Activated CD4-positive, alpha-beta T cell treated with anti-CD3 and anti-CD28 coated beads for 36 hours (primary cell): ENCODE measurements at regions of chr12 and their contacts with region 1.

Region 1: DNA sequence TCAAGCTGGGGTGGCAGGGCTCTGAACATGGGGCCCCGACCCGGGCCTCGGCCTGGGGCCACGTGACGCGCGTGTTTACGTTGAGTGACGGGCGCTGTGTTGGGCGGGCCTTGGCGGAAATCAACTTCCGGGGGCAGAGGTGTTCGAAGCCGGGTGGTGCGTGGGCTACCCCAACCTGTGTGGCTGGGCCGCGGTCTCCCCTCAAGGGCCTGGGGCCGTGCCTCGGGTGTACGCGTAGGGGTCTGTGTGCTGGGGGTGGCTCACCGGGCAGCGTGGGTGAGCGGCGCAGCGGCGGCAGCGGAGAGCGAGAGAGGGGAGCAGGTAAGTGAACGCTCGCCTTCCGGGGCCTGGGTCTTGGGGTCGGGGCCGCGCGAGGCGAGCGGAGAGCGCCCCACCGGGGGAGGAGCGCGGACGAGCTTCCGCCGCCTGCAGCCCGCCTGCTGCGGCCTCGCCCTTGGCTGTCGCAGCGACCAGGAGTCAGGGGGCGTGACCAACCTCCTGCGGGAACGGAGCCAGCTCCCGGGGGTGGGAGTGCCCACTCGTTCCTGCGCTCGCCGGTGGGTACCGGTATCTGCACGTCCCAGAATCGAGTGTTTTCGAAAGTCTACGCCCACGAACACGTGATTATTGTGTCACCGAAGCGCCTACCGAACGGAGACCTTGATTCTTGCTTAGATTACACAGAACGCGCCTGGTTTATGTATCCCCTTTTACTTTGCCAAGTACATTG is at the start of gene CCDC91:
- DNase-seq: peak; percentile 93
- ATAC-seq: peak; percentile 83
- H3K4me3 Mint-ChIP-seq: peak within 1 kb of the TSS; percentile 89
- H3K27ac Mint-ChIP-seq: peak within 1 kb of the TSS; percentile 99
- H3K4me1 Mint-ChIP-seq: peaks cover 65% of the 10 kb centered on the region
- H3K27me3 Mint-ChIP-seq: no peaks in the 10 kb centered on the region
- total RNA-seq, gene CCDC91: 13.9 to 16.0 TPM

Region 2: GRCh38 chr12:27332407-27333301 is 857.8 kb before region 1 on chr12 and contains the start of gene BMAL2:
- CTCF ChIA-PET with region 1: no interaction called
- POLR2A ChIA-PET with region 1: no interaction called
- intact Hi-C with region 1: loop called in 1 of 2 experiments (anchors 1 kb)
- DNase-seq: peak; percentile 66
- ATAC-seq: peak; percentile 28
- H3K4me3 Mint-ChIP-seq: peak within 1 kb of the TSS; percentile 82
- H3K27ac Mint-ChIP-seq: peak within 1 kb of the TSS; percentile 90
- H3K4me1 Mint-ChIP-seq: peaks cover 42% of the 10 kb centered on the region
- H3K27me3 Mint-ChIP-seq: peaks cover 30% of the 10 kb centered on the region
- total RNA-seq, gene BMAL2: 10.9 to 13.2 TPM

Region 3: GRCh38 chr12:27779920-27780611 is 410.4 kb before region 1 on chr12 and contains the starts of genes KLHL42 and MANSC4:
- CTCF ChIA-PET with region 1: no interaction called
- POLR2A ChIA-PET with region 1: no interaction called
- intact Hi-C with region 1: loop called in 1 of 2 experiments (anchors 5 kb)
- DNase-seq: peak; percentile 80
- ATAC-seq: peak; percentile 86
- H3K4me3 Mint-ChIP-seq: peak within 1 kb of the TSS; percentile 80
- H3K27ac Mint-ChIP-seq: peak within 1 kb of the TSS; percentile 83
- H3K4me1 Mint-ChIP-seq: peaks cover 34% of the 10 kb centered on the region
- H3K27me3 Mint-ChIP-seq: no peaks in the 10 kb centered on the region
- total RNA-seq, gene KLHL42: 7.1 to 9.2 TPM
- total RNA-seq, gene MANSC4: not detected

Region 4: DNA sequence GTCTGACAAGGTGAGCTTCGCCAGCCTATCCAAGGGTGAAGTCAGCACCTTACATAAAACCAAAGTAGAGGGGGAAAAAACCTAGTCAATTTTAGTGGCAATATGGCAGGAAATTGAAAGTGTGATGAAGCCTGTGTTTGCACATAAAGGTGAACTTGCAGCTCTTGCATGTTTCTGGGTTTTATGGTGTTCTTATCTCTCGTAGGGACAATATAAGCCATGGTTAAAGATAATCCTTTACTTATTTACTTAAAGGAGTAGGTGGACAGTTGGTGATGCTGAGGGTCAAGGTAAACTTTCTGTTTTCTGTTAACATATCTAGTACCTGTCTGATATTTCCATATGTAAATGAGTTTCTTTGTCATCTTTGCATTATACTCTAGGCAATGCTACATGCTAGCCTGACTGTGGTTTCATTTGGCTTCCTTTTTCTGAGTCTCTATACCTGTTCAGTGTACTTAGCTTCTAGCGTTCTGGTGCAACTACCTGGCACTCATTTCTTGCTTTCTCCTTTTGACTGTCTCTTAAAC is 32.6 kb after region 1 on chr12:
- CTCF ChIA-PET with region 1: interaction called, 8 read pairs
- POLR2A ChIA-PET with region 1: no interaction called
- intact Hi-C with region 1: loop called (anchors 1 to 2 kb)
- DNase-seq: peak; percentile 25
- ATAC-seq: peak; percentile 94
- H3K4me3 Mint-ChIP-seq: peak overlapping the region; percentile 29
- H3K27ac Mint-ChIP-seq: peak overlapping the region; percentile 77
- H3K4me1 Mint-ChIP-seq: peaks cover 48% of the 10 kb centered on the region
- H3K27me3 Mint-ChIP-seq: no peaks in the 10 kb centered on the region

Region 5: GRCh38 chr12:28456934-28457710 is 266.6 kb after region 1 on chr12:
- CTCF ChIA-PET with region 1: no interaction called
- POLR2A ChIA-PET with region 1: no interaction called
- intact Hi-C with region 1: no loop called
- DNase-seq: no peak
- ATAC-seq: no peak
- H3K4me3 Mint-ChIP-seq: no peak overlapping the region
- H3K27ac Mint-ChIP-seq: no peak overlapping the region
- H3K4me1 Mint-ChIP-seq: no peaks in the 10 kb centered on the region
- H3K27me3 Mint-ChIP-seq: no peaks in the 10 kb centered on the region

Region 6: DNA sequence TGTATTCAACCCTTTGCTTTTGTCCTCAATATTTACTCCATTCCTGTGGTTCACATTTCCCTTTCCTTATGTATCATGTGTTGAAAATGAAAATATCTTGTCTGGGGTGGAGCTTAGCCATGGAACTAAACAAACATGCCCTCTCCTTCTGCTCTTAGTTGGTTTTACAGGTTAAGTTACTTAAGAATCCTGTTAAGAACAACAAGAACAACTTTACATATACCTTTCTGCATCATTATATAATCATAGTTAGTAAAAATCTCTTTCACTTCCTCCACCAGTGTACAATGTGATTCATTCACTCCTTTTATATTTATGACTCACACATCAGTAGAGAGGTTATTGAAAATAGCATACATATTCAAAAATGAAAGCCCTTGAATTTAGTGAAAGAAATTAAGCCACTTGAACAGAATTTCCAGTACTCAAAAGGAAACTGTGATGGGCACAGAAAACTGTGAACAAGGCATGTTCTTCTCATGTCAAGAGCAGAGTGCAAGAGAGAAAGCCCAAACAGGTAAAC is 307.5 kb after region 1 on chr12:
- CTCF ChIA-PET with region 1: no interaction called
- POLR2A ChIA-PET with region 1: no interaction called
- intact Hi-C with region 1: loop called in 1 of 2 experiments (anchors 5 kb)
- DNase-seq: peak; percentile 4
- ATAC-seq: peak; percentile 96
- H3K4me3 Mint-ChIP-seq: no peak overlapping the region
- H3K27ac Mint-ChIP-seq: no peak overlapping the region
- H3K4me1 Mint-ChIP-seq: peaks cover 16% of the 10 kb centered on the region
- H3K27me3 Mint-ChIP-seq: no peaks in the 10 kb centered on the region